Ascending aorta (tissue), 2 donors: ENCODE measurements at regions of chr16 and their contacts with region 1.

Region 1: GRCh38 chr16:12062343-12063005 is 85.9 kb downstream of the SNX29 start:
- DNase-seq: peak; percentile 89 to 98
- H3K4me3 ChIP-seq: no peak overlapping the region
- H3K27ac ChIP-seq: peak overlapping the region; percentile 89 to 94
- H3K4me1 ChIP-seq: peaks cover 7 to 31% of the 10 kb centered on the region in 2 donors
- H3K27me3 ChIP-seq: no peaks in the 10 kb centered on the region
- CTCF ChIP-seq: no peak

Region 2: DNA sequence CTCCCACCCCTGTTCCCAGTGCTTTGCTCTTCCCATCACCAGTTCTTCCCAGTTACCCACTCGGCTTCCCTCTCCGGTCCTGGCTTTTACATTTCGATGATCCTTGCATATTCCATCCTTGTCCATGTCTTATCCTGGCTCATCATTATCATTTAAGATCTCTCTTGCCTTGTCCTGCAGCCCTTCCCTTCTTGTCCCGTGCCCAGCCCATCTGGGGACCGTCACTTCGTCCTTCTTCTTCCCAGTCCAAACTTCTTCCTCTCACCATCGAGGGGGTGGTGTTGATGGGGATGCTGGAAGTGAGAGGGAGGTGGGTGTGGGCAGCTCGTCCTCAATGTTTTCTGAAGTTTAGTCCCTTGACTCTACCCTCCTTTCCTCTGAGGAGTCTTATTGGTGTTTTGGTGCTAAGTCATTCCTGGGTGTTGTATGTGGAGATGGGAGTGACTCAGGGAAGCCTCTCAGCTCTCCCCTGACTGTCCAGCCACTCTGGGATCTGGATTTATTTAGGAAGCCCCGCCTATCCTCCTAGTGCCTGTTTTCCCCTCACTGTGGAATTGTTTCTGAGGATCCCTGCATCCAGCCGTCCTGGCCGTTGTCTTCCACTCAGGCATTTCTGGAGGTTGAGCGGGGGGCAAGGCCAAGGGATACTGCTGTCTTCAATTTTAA is 85.0 kb before region 1 on chr16:
- intact Hi-C with region 1: loop called (anchors 2 kb)
- DNase-seq: peak in 1 of 2 donors; percentile 66
- H3K4me3 ChIP-seq: peak overlapping the region; percentile 78 to 92
- H3K27ac ChIP-seq: peak overlapping the region; percentile 73 to 83
- H3K4me1 ChIP-seq: peaks cover 0 to 8% of the 10 kb centered on the region in 2 donors
- H3K27me3 ChIP-seq: no peaks in the 10 kb centered on the region
- CTCF ChIP-seq: no peak

Region 3: DNA sequence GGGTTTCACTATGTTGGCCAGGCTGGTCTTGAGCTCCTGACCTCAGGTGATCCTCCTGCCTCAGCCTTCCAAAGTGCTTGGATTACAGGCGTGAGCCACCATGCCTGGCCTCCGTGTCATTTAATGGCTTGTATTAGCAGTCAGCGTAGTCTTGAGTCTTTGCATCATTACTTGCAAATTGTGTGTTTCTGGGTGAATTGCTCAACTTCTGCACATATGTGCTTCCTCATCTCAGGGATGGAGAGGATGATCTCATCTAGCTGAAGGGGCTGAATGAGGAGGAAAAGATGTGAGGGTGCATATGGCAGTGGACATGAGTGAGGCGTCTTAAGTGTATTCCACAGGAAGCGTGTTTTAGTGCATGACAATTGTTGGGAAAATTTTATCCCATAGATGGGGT is 69.8 kb after region 1 on chr16:
- intact Hi-C with region 1: no loop called
- DNase-seq: no peak
- H3K4me3 ChIP-seq: no peak overlapping the region
- H3K27ac ChIP-seq: no peak overlapping the region
- H3K4me1 ChIP-seq: no peaks in the 10 kb centered on the region
- H3K27me3 ChIP-seq: no peaks in the 10 kb centered on the region
- CTCF ChIP-seq: no peak